Caco-2 (cell line): ENCODE measurements at regions of chr3 and their contacts with region 1.

Region 1: DNA sequence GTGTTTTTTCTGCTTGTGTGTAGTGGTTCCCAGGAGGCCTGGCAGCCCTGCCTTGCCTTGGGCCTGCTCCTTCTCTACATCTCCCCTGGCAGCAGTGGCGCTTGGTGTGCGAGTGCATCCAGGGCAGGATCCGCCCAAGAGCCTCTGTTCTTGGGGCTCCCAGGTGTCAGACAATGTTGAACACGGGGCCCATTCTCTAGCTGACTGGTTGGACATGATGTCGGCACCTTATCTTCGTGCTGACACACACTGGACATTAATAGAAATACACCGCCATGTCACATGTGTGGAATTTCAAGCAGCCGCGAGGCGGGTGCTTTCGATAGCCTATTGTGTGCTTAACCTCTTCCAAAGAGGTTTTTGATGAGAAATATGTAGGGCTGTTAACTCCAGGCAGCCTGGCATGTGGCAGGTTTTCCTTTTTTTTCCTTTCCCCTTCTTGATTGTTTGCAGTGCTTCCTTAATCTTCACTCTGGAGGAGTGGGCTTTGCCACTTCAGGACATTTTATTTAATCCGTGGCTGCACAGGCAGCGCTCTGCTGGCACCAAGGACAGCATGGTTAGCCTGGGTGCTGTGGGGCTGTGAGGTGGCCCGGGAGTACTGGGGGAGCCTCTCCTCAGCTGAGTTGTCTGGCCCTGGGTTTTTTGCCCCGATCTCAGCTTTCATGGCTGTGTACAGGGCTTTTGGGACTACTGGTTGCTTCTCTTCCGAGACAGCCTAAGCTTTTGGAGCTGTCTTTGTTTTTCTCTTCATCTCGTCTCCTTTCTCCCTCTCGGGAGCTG is 42.5 kb downstream of the CHCHD6 start:
- DNase-seq: peak; percentile 83 to 91
- H3K4me3 ChIP-seq: peak overlapping the region; percentile 13; the same call in 1 of the 2 replicates
- H3K4me3 Mint-ChIP-seq: peak overlapping the region; percentile 57
- H3K27ac Mint-ChIP-seq: peak overlapping the region; percentile 96
- H3K4me1 ChIP-seq: peaks cover 55% of the 10 kb centered on the region
- H3K4me1 Mint-ChIP-seq: peaks cover 46% of the 10 kb centered on the region
- H3K27me3 ChIP-seq: no peaks in the 10 kb centered on the region
- H3K27me3 Mint-ChIP-seq: no peaks in the 10 kb centered on the region
- CTCF ChIP-seq: peak; percentile 27 to 36

Region 2: GRCh38 chr3:126703512-126704462 is 42.8 kb before region 1 on chr3 and contains the start of gene CHCHD6:
- CTCF ChIA-PET with region 1: no interaction called
- POLR2A ChIA-PET with region 1: no interaction called
- intact Hi-C with region 1: loop called (anchors 1 kb)
- DNase-seq: peak; percentile 98 to 99
- H3K4me3 ChIP-seq: peak within 1 kb of the TSS; percentile 78
- H3K4me3 Mint-ChIP-seq: peak within 1 kb of the TSS; percentile 91
- H3K27ac Mint-ChIP-seq: peak within 1 kb of the TSS; percentile 33
- H3K4me1 ChIP-seq: peaks cover 7% of the 10 kb centered on the region; the same call in 1 of the 2 replicates
- H3K4me1 Mint-ChIP-seq: peaks cover 7% of the 10 kb centered on the region
- H3K27me3 ChIP-seq: no peaks in the 10 kb centered on the region
- H3K27me3 Mint-ChIP-seq: peaks cover 2% of the 10 kb centered on the region
- CTCF ChIP-seq: peak; percentile 50
- total RNA-seq, gene CHCHD6: 47.9 and 49.5 TPM in 2 replicates

Region 3: GRCh38 chr3:126782554-126782953 is 36.0 kb after region 1 on chr3:
- CTCF ChIA-PET with region 1: no interaction called
- POLR2A ChIA-PET with region 1: no interaction called
- intact Hi-C with region 1: no loop called
- DNase-seq: peak; percentile 37 to 68
- H3K4me3 ChIP-seq: no peak overlapping the region
- H3K4me3 Mint-ChIP-seq: no peak overlapping the region
- H3K27ac Mint-ChIP-seq: peak overlapping the region; percentile 79
- H3K4me1 ChIP-seq: peaks cover 14% of the 10 kb centered on the region
- H3K4me1 Mint-ChIP-seq: peaks cover 27% of the 10 kb centered on the region
- H3K27me3 ChIP-seq: no peaks in the 10 kb centered on the region
- H3K27me3 Mint-ChIP-seq: no peaks in the 10 kb centered on the region
- CTCF ChIP-seq: no peak